Ovary (tissue), 10 donors: ENCODE measurements at regions of chr12 and their contacts with region 1.

Region 1: GRCh38 chr12:22313961-22314330 is 20.6 kb downstream of the ST8SIA1 start:
- DNase-seq: no peak
- H3K4me3 ChIP-seq: no peak overlapping the region
- H3K27ac ChIP-seq: no peak overlapping the region
- H3K4me1 ChIP-seq: no peaks in the 10 kb centered on the region
- H3K27me3 ChIP-seq: no peaks in the 10 kb centered on the region
- CTCF ChIP-seq: no peak
- EP300 ChIP-seq: no peak
- POLR2A ChIP-seq: no peak

Region 2: GRCh38 chr12:22353615-22354325 is 39.8 kb after region 1 on chr12:
- intact Hi-C with region 1: loop called in 1 of 4 experiments (anchors 2 kb)
- DNase-seq: no peak
- H3K4me3 ChIP-seq: no peak overlapping the region
- H3K27ac ChIP-seq: no peak overlapping the region
- H3K4me1 ChIP-seq: no peaks in the 10 kb centered on the region
- H3K27me3 ChIP-seq: no peaks in the 10 kb centered on the region
- CTCF ChIP-seq: no peak
- EP300 ChIP-seq: no peak
- POLR2A ChIP-seq: no peak